ENCODE measurements at regions of chr10 and their contacts with region 1.

Region 1: DNA sequence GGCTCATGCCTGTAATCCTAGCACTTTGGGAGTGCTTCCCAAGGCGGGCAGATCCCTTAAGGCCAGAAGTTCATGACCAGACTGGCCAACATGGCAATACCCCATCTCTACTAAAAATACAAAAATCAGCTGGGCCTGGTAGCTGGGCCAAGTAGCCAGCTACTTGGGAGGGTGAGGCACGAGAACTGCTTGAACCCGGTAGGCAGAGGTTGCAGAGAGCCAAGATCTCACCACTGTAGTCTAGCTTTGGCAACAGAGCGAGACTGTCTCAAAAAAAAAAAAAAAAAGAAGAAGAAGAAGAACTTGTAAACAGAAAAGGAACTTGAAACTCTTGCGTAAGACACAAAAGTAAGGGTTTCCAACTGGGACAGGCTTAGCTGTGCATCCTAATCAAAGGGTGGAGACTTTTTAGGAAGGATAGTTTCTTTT is 5.6 kb upstream of the IFIT2 start:
- DNase-seq: no peak
- ATAC-seq: no peak
- H3K4me3 Mint-ChIP-seq: peak overlapping the region; percentile 32
- H3K27ac Mint-ChIP-seq: peak overlapping the region; percentile 23
- H3K4me1 Mint-ChIP-seq: peaks cover 48% of the 10 kb centered on the region
- H3K27me3 Mint-ChIP-seq: peaks cover 3% of the 10 kb centered on the region

Region 2: DNA sequence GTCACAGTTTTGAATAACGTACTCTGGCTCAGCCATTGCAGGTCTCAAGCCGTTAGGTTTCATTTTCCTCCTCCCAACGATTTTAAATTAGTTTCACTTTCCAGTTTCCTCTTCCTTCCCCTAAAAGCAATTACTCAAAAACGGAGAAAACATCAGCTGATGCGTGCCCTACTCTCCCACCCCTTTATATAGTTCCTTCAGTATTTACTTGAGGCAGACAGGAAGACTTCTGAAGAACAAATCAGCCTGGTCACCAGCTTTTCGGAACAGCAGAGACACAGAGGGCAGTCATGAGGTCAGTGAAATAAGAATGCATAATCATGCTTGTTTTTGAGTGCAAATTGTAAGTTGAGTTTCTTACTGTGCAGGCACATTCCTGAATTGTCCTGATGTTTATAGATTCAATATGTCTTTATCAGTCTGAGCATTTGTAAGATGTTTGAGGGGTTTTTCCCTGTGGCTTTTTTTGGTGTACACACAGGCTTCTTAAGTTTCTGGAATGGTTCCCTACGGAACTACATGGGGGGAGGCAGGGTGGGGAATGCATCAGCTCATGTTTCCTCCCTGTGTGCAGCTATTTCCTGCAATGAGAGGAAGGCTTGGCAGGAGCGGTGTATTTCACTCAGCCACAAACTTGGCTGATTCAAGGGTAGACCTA is 31.7 kb after region 1 on chr10 and contains the start of gene IFIT3:
- CTCF ChIA-PET with region 1: interaction called, 8 read pairs
- POLR2A ChIA-PET with region 1: interaction called, 10 read pairs
- DNase-seq: peak; percentile 48
- ATAC-seq: peak; percentile 42
- H3K4me3 Mint-ChIP-seq: peak within 1 kb of the TSS; percentile 93
- H3K27ac Mint-ChIP-seq: peak within 1 kb of the TSS; percentile 96
- H3K4me1 Mint-ChIP-seq: peaks cover 63% of the 10 kb centered on the region
- H3K27me3 Mint-ChIP-seq: no peaks in the 10 kb centered on the region
- total RNA-seq, gene IFIT3: 42.8 to 43.7 TPM

Region 3: GRCh38 chr10:89440245-89441009 is 144.2 kb after region 1 on chr10:
- CTCF ChIA-PET with region 1: no interaction called
- POLR2A ChIA-PET with region 1: no interaction called
- DNase-seq: no peak
- ATAC-seq: no peak
- H3K4me3 Mint-ChIP-seq: no peak overlapping the region
- H3K27ac Mint-ChIP-seq: no peak overlapping the region
- H3K4me1 Mint-ChIP-seq: no peaks in the 10 kb centered on the region
- H3K27me3 Mint-ChIP-seq: peaks cover 27% of the 10 kb centered on the region

Measured in activated CD8-positive, alpha-beta T cell treated with anti-CD3 and anti-CD28 coated beads, Interleukin-2, amount 10 ng/mL, durations not matched to agents 7 days and 5 days (primary cell).